Activated CD4-positive, alpha-beta T cell treated with anti-CD3 and anti-CD28 coated beads for 36 hours (primary cell): ENCODE measurements at regions of chr2 and their contacts with region 1.

Region 1: DNA sequence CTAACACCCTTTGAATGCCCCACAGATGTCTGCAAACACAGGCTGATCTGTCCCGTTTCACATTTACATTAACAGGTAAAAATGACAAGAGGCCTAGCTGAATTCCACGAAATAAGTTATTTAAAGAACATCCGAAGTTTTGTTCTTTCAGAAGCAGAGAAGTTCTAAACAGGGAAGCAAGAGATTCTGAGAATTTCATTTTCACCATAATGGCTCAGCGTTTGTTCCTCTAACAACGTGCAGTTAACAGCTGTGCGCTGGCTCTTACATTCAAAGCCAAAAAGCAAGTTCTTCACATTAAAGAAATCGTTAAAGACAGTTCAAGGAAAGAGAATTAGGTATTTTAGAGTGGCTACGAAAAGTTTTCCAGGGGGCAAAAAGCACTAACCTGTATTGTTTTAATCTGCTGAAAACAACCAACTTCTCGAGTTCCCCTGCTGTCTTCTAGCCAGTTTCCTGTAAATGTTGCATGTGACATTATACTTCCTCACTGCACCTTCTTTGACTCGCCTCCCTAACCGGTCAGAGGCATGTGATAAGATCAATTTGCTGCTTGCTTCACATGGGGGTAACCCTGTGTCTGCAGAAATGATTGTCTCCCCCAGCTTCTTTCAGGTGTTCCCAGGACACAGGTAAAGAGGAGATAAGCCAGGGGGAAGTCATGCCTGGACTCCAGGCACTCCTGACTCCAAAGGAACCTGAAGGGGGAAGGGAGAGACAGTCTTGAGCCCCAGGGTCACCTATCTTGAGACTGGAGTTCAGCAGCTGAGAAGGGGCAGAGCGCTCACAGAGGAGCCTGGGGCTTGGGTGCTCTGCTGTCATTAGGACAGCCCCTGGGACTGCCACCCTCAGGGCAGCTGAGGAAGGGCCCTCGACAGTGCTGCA is 36.8 kb upstream of the WIPF1 start:
- DNase-seq: peak; percentile 69
- ATAC-seq: peak; percentile 70
- H3K4me3 Mint-ChIP-seq: peak overlapping the region; percentile 92
- H3K27ac Mint-ChIP-seq: peak overlapping the region; percentile 98
- H3K4me1 Mint-ChIP-seq: peaks cover 56% of the 10 kb centered on the region
- H3K27me3 Mint-ChIP-seq: no peaks in the 10 kb centered on the region

Region 2: GRCh38 chr2:173766537-173767289 is 867.7 kb before region 1 on chr2:
- CTCF ChIA-PET with region 1: no interaction called
- POLR2A ChIA-PET with region 1: no interaction called
- intact Hi-C with region 1: no loop called
- DNase-seq: no peak
- ATAC-seq: no peak
- H3K4me3 Mint-ChIP-seq: no peak overlapping the region
- H3K27ac Mint-ChIP-seq: no peak overlapping the region
- H3K4me1 Mint-ChIP-seq: no peaks in the 10 kb centered on the region
- H3K27me3 Mint-ChIP-seq: peaks cover 2% of the 10 kb centered on the region

Region 3: DNA sequence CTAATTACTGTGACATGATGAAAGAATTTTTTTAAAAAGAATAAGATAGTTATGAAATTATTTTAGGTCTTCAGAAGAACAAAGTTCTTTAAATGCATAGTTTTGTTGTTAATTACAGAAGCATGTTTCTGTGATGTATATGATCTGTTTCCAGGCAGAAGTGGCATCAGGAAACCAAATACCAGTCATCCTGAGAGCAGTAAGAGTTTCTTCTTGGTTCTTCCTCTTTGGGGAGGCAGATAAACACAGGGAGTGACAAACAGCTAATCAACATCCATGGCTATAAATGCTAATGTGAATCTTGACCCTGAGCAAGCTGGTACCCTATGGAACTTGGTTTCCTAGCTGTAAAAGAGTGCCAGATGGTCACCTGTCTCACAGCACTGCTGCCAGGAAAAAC is 65.9 kb before region 1 on chr2:
- CTCF ChIA-PET with region 1: interaction called, 3 read pairs
- POLR2A ChIA-PET with region 1: interaction called, 3 read pairs
- intact Hi-C with region 1: loop called (anchors 2 kb)
- DNase-seq: no peak
- ATAC-seq: peak; percentile 75
- H3K4me3 Mint-ChIP-seq: no peak overlapping the region
- H3K27ac Mint-ChIP-seq: peak overlapping the region; percentile 47
- H3K4me1 Mint-ChIP-seq: peaks cover 59% of the 10 kb centered on the region
- H3K27me3 Mint-ChIP-seq: no peaks in the 10 kb centered on the region

Region 4: DNA sequence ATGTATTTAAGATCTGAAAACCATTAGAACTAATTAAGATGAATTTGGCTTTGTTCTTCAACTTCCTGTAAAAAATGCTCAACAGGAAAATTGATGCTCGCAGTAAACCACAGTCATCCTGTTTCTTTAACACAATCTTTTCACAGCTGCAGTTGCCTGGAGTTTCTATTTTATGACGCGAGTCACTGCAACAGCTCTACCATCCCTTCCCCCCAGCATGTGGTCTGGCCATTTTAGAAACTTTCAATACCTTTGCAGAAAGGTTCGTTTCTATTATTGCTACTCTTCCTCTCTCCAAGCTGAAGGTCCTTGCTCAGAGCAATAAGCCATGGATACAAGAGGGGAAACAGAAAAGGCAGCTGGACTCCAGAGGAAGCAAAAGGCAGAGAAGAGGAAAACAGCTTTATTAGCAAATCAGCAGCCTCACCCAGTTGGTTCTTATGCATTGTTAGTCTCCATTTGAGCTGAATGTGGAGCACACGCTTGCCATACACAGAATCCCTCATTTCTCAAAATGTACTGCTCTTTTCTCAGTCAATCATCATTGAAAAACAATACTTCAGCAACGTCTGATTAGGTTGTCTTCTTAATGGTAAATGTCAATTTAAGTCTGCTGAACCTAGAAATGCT is 40.7 kb before region 1 on chr2:
- CTCF ChIA-PET with region 1: interaction called, 6 read pairs
- POLR2A ChIA-PET with region 1: interaction called, 7 read pairs
- intact Hi-C with region 1: loop called (anchors 1 kb)
- DNase-seq: peak; percentile 80
- ATAC-seq: peak; percentile 67
- H3K4me3 Mint-ChIP-seq: peak overlapping the region; percentile 70
- H3K27ac Mint-ChIP-seq: peak overlapping the region; percentile 97
- H3K4me1 Mint-ChIP-seq: peaks cover 63% of the 10 kb centered on the region
- H3K27me3 Mint-ChIP-seq: no peaks in the 10 kb centered on the region

Region 5: GRCh38 chr2:174615871-174616436 is 18.4 kb before region 1 on chr2:
- CTCF ChIA-PET with region 1: interaction called, 5 read pairs
- POLR2A ChIA-PET with region 1: no interaction called
- intact Hi-C with region 1: loop called (anchors 1 to 2 kb)
- DNase-seq: no peak
- ATAC-seq: peak; percentile 67
- H3K4me3 Mint-ChIP-seq: peak overlapping the region; percentile 17
- H3K27ac Mint-ChIP-seq: peak overlapping the region; percentile 88
- H3K4me1 Mint-ChIP-seq: peaks cover 88% of the 10 kb centered on the region
- H3K27me3 Mint-ChIP-seq: no peaks in the 10 kb centered on the region

Region 6: DNA sequence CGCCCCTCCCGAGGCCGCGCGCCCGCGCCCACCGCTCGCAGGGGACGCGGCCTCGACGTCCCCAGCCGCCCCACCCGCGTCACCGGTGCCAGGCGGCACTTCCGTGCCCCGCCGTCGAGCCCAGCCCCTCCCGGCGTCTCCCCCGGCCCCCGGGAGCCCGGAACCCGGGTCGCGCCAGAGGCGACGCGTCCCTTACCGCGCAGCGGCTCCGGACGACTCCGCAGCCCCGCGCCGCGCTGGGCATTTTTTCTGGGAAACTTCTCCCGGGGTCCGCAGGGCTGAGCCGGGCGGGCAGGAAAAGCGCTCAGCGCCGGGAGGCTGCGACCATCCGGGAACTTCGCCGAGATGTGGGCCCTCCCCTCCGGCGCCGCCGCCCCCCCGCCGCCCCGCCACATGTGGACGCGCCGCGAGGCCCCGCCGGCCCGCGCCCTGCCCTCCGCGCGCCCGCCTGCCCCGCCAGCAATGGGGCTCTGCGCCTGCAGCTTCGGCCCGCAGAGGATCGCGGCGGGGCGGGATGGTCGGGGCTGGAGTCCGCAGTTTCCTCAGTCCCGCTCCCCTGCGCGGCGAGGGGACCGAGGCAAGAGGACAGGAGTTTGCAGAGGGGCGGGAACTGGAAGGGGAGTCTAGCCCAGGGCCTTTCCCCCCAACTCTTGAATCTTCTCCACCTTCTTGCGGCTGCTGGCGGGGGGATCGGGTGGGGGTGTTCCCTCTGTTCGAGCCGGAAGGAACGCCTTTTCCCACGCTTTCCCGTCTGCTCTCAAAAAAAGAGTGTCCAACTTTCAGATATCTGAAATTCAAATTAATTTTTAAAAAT is 48.4 kb after region 1 on chr2:
- CTCF ChIA-PET with region 1: interaction called, 50 read pairs
- POLR2A ChIA-PET with region 1: interaction called, 3 read pairs
- intact Hi-C with region 1: loop called (anchors 1 to 2 kb)
- DNase-seq: peak; percentile 66
- ATAC-seq: peak; percentile 66
- H3K4me3 Mint-ChIP-seq: peak overlapping the region; percentile 82
- H3K27ac Mint-ChIP-seq: peak overlapping the region; percentile 90
- H3K4me1 Mint-ChIP-seq: peaks cover 48% of the 10 kb centered on the region
- H3K27me3 Mint-ChIP-seq: no peaks in the 10 kb centered on the region

Region 7: DNA sequence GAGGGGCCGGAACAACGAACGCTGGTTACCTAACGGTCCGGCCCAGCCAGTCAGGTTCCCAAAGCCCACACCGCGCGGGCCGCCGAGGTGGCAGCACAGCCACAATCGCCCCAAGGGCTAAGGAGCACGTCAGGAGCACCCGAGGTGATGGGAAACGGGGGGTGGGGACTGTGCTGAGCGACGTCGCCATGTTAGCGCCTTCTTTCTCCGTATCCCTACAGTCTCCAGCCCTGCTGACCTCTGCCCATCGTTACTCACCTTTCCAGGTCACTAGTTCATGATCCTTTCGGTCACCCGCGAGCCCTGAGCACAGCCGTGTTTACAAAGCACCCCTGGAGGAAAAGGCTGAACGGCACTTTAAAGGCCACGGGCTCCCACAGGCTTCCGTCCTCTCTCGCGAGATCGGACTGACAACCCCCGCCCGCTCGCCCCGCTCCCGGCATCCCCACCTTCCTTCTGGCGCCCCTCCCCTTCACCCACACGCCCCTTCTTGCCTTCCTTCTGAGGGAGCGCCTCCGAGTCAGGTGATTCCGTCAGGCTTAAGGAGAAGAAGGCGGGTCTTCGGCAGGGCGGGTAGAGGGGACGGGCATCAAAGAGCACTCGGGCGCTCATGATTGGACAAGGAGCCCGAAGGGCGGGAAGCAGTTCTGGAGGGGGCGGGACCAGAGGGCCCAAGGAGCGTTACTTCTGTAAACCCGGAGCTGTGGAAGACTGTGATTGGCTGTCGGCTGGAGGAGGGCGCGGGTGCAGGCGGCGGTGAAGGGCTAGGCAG is 533.6 kb after region 1 on chr2 and contains the start of gene ATF2:
- CTCF ChIA-PET with region 1: no interaction called
- POLR2A ChIA-PET with region 1: no interaction called
- intact Hi-C with region 1: loop called in 1 of 2 experiments (anchors 5 kb)
- DNase-seq: peak; percentile 98
- ATAC-seq: peak; percentile 95
- H3K4me3 Mint-ChIP-seq: peak within 1 kb of the TSS; percentile 95
- H3K27ac Mint-ChIP-seq: peak within 1 kb of the TSS; percentile 99
- H3K4me1 Mint-ChIP-seq: peaks cover 35% of the 10 kb centered on the region
- H3K27me3 Mint-ChIP-seq: no peaks in the 10 kb centered on the region
- total RNA-seq, gene ATF2: 52.2 to 67.5 TPM